Calu3 (cell line): ENCODE measurements at regions of chr12 and their contacts with region 1.

Region 1: DNA sequence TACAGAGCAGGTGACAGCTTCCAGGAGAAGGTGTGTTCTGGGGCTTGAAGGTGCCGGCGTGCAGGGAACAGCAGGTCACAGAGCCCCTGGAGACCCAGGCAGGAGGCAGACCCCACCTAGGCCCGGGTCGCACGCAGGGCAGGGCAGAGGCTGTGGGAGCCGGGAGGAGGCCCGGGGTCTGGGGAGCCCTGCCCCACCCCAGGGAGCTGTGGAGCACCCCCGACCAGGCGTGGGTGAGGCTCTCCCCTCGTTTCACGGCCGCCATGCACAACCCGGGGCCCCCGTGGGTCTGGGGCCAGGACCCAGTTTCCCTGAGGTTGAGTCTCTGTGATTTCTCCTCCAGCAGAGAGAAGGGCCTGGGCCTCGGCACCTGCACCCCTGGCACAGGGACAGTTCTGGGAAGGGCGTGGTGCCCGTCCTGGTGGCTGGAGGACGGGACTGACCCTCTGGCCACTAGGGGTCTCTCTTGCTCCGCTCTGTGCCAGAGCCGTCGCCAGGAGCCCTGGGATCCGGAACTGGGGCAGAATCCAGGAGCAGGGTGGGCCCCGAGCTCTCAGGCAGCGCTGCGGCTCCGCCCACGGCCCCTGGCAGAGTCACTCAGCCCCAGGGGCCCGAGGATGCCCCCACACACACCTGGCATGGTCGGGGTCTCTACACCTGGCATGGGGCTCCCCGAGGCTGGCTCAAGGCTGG is 75.2 kb upstream of the FBRSL1 start:
- DNase-seq: peak; percentile 97
- H3K4me3 Mint-ChIP-seq: no peak overlapping the region
- H3K27ac Mint-ChIP-seq: no peak overlapping the region
- H3K4me1 Mint-ChIP-seq: no peaks in the 10 kb centered on the region
- H3K27me3 Mint-ChIP-seq: peaks cover 41% of the 10 kb centered on the region
- CTCF ChIP-seq: peak; percentile 98

Region 2: GRCh38 chr12:131872185-131873051 is 542.4 kb before region 1 on chr12:
- CTCF ChIA-PET with region 1: no interaction called
- intact Hi-C with region 1: no loop called
- DNase-seq: peak; percentile 90
- H3K4me3 Mint-ChIP-seq: no peak overlapping the region
- H3K27ac Mint-ChIP-seq: peak overlapping the region; percentile 49
- H3K4me1 Mint-ChIP-seq: peaks cover 29% of the 10 kb centered on the region
- H3K27me3 Mint-ChIP-seq: no peaks in the 10 kb centered on the region
- CTCF ChIP-seq: no peak

Region 3: GRCh38 chr12:132153501-132154340 is 261.1 kb before region 1 on chr12:
- CTCF ChIA-PET with region 1: interaction called, 96 read pairs
- intact Hi-C with region 1: loop called (anchors 2 kb)
- DNase-seq: peak; percentile 90
- H3K4me3 Mint-ChIP-seq: peak overlapping the region; percentile 50
- H3K27ac Mint-ChIP-seq: no peak overlapping the region
- H3K4me1 Mint-ChIP-seq: no peaks in the 10 kb centered on the region
- H3K27me3 Mint-ChIP-seq: no peaks in the 10 kb centered on the region
- CTCF ChIP-seq: peak; percentile 91

Region 4: DNA sequence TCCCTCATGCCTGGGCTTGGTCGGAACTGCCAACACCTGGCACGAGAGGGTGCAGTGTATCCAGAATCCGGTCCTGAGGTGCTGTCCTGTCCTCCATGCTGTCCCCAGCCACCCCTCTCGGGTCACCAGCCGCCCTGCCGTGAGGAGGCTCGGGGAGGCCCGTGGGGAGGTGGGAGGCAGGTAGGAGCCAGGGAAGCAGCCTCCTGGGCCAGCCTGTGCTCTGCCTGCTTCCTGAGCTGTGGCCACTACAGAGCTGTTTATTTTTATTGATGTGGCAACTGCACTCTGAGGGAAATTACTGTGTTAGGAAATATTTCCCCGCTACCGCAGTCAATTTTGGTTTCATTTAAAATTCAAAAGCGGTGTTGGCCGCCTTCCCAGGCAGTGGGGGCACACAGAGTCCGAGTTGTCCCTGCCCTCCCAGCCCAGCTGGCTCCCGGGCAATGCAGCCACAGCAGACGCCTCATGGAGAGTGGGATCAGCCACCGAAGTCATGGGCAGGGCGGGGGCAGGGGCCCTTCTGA is 252.2 kb before region 1 on chr12:
- CTCF ChIA-PET with region 1: interaction called, 13 read pairs
- intact Hi-C with region 1: no loop called
- DNase-seq: peak; percentile 50
- H3K4me3 Mint-ChIP-seq: no peak overlapping the region
- H3K27ac Mint-ChIP-seq: no peak overlapping the region
- H3K4me1 Mint-ChIP-seq: peaks cover 16% of the 10 kb centered on the region
- H3K27me3 Mint-ChIP-seq: peaks cover 69% of the 10 kb centered on the region
- CTCF ChIP-seq: no peak

Region 5: GRCh38 chr12:132523576-132524331 is 109.0 kb after region 1 on chr12:
- CTCF ChIA-PET with region 1: interaction called, 30 read pairs
- intact Hi-C with region 1: loop called (anchors 5 kb)
- DNase-seq: peak; percentile 92
- H3K4me3 Mint-ChIP-seq: peak overlapping the region; percentile 50
- H3K27ac Mint-ChIP-seq: no peak overlapping the region
- H3K4me1 Mint-ChIP-seq: peaks cover 16% of the 10 kb centered on the region
- H3K27me3 Mint-ChIP-seq: no peaks in the 10 kb centered on the region
- CTCF ChIP-seq: peak; percentile 93

Region 6: DNA sequence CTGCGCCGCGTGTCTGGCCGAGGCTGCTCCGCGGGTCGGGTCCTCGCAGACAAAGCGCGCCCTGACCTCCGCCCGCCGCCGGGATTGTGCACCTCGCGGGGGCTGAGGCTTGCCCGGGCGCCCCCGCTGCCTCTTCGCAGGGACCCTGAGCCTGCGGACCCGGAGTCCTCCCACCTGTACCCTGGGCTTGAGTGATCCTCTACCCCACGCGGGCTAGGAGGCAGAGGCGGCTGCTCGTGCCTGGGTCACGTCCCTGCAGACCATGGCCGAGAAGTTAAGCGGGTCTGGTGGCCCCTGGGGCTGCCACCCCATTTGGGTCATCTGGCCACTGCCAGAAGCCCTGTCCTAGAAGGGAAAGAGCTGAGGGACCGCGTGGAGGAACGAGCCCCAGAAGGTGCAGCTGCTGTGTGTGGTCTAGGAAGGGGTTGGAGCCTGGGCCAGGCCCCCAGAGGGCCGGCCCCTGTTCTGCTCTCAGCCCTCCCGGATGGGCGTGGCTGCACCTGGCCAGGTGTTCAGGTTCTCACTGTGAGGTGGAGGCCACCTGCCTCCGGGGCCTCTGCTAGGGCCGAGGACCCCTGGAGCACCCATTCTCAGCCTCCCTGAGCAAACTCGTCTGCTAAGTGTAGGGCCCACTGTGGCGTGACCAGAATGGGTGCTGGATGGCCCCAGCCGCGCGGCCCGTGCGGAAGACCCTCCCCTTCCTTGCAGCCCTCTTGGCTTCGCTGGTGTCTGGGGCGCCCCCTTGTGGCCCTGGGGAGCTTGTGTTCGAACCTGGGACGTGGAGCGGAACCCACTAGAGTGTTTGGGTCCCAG is 146.0 kb after region 1 on chr12:
- CTCF ChIA-PET with region 1: interaction called, 9 read pairs
- intact Hi-C with region 1: loop called (anchors 1 kb)
- DNase-seq: peak; percentile 92
- H3K4me3 Mint-ChIP-seq: peak overlapping the region; percentile 88
- H3K27ac Mint-ChIP-seq: peak overlapping the region; percentile 48
- H3K4me1 Mint-ChIP-seq: no peaks in the 10 kb centered on the region
- H3K27me3 Mint-ChIP-seq: no peaks in the 10 kb centered on the region
- CTCF ChIP-seq: peak; percentile 94

Region 7: GRCh38 chr12:132614861-132615578 is 200.2 kb after region 1 on chr12:
- CTCF ChIA-PET with region 1: interaction called, 40 read pairs
- intact Hi-C with region 1: loop called (anchors 1 kb)
- DNase-seq: peak; percentile 93
- H3K4me3 Mint-ChIP-seq: no peak overlapping the region
- H3K27ac Mint-ChIP-seq: no peak overlapping the region
- H3K4me1 Mint-ChIP-seq: no peaks in the 10 kb centered on the region
- H3K27me3 Mint-ChIP-seq: peaks cover 66% of the 10 kb centered on the region
- CTCF ChIP-seq: peak; percentile 93

Region 8: GRCh38 chr12:133057446-133057845 is 642.7 kb after region 1 on chr12:
- CTCF ChIA-PET with region 1: no interaction called
- intact Hi-C with region 1: no loop called
- DNase-seq: no peak
- H3K4me3 Mint-ChIP-seq: no peak overlapping the region
- H3K27ac Mint-ChIP-seq: peak overlapping the region; percentile 73
- H3K4me1 Mint-ChIP-seq: no peaks in the 10 kb centered on the region
- H3K27me3 Mint-ChIP-seq: no peaks in the 10 kb centered on the region
- CTCF ChIP-seq: no peak